ENCODE measurements at regions of chrX and their contacts with region 1.

Region 1: GRCh38 chrX:22063284-22063683 is 31.2 kb downstream of the PHEX start:
- DNase-seq: peak; percentile 47
- H3K4me3 Mint-ChIP-seq: no peak overlapping the region
- H3K27ac Mint-ChIP-seq: peak overlapping the region; percentile 38
- H3K4me1 Mint-ChIP-seq: peaks cover 59% of the 10 kb centered on the region
- H3K27me3 Mint-ChIP-seq: no peaks in the 10 kb centered on the region

Region 2: GRCh38 chrX:21990832-21991231 is 72.5 kb before region 1 on chrX:
- CTCF ChIA-PET with region 1: interaction called, 5 read pairs
- POLR2A ChIA-PET with region 1: no interaction called
- intact Hi-C with region 1: loop called (anchors 1 kb)
- DNase-seq: no peak
- H3K4me3 Mint-ChIP-seq: no peak overlapping the region
- H3K27ac Mint-ChIP-seq: peak overlapping the region; percentile 42
- H3K4me1 Mint-ChIP-seq: peaks cover 33% of the 10 kb centered on the region
- H3K27me3 Mint-ChIP-seq: no peaks in the 10 kb centered on the region

Region 3: GRCh38 chrX:22025751-22026150 is 37.5 kb before region 1 on chrX:
- CTCF ChIA-PET with region 1: no interaction called
- POLR2A ChIA-PET with region 1: no interaction called
- intact Hi-C with region 1: loop called (anchors 1 kb)
- DNase-seq: no peak
- H3K4me3 Mint-ChIP-seq: no peak overlapping the region
- H3K27ac Mint-ChIP-seq: no peak overlapping the region
- H3K4me1 Mint-ChIP-seq: peaks cover 10% of the 10 kb centered on the region
- H3K27me3 Mint-ChIP-seq: no peaks in the 10 kb centered on the region

Measured in activated CD4-positive, alpha-beta memory T cell treated with anti-CD3 and anti-CD28 coated beads for 36 hours (primary cell).